Lower leg skin (tissue), 4 donors: ENCODE measurements at regions of chr10 and their contacts with region 1.

Region 1: DNA sequence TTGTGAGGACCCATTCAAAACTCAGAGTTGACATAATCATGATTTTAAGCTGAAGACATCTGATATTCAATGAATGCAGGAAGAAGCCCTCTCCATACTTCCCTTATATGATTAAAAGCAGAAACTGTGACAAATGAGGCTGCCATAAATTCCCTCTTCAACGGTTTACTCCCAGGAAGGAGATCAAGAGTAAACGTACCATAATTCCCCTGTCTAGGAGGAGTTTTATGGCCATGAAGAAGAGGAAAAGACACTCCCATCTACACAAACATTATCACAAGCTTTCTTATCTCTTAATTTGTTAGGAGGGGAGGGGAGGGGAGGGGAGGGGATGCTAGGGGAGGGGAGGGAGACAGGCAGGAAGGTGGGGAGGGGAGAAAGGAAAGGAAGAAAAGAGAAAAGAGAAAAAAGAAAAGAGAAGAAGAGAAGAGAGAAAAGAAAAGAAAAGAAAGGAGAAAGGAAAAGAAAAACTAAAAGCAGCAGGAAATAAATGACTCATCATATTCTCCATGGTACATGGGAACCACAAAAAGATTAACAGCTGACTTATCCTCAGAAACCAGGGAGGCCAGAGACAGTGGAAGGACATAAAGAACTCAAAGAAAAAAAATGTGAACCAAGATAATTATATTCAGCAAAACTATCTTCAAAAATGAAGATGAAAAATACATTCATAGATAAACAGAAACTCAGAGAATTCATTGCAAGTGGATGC is 121.6 kb downstream of the ALOX5 start:
- DNase-seq: no peak
- H3K4me3 ChIP-seq: no peak overlapping the region
- CTCF ChIP-seq: no peak
- POLR2A ChIP-seq: no peak

Region 2: DNA sequence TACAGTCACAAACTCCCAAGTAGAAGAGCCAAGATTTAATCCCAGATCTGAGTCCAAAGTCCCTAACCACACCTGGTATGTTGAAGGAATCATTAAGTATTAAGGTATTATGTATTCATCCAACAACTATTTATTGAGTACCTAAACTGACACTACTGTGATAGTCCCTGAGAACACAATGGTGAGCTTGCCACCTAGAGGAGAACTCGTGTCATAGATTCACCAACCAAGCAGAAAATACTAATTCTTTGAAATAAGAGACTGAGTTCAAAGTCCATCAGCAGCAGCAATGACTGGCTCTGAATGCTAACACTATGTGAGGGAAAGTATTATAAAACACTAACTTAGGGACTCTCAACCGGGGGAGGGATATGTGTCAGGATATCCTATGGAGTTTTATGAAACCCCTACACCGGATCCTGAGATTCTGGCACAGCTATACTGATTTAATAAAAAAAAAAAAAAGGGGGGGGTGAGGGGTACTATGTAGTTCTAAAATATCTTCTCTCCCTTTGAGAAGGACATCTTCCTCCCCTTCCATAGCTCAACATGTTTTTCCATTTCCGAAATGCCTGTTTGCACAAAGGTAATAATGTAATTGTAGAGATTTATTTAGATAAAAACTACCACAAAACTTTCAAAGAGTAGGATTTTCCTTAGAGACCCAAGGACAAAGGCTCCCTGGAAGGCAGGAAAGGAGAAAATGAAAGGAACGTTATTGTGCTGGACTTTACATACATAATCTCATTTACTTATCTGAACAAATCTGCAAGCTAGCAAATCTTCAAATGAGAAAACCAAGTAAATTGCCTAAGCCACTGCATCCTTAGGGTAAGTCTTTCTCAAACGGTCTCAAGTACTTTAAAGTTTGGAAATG is 533.2 kb after region 1 on chr10:
- intact Hi-C with region 1: loop called (anchors 5 kb)
- DNase-seq: no peak
- H3K4me3 ChIP-seq: no peak overlapping the region
- CTCF ChIP-seq: no peak
- POLR2A ChIP-seq: no peak